Left ventricle myocardium superior (tissue), 1 donor: ENCODE measurements at regions of chr2 and their contacts with region 1.

Region 1: GRCh38 chr2:102703748-102704147 is 58.1 kb upstream of the TMEM182 start:
- DNase-seq: no peak
- ATAC-seq: peak; percentile 59

Region 2: DNA sequence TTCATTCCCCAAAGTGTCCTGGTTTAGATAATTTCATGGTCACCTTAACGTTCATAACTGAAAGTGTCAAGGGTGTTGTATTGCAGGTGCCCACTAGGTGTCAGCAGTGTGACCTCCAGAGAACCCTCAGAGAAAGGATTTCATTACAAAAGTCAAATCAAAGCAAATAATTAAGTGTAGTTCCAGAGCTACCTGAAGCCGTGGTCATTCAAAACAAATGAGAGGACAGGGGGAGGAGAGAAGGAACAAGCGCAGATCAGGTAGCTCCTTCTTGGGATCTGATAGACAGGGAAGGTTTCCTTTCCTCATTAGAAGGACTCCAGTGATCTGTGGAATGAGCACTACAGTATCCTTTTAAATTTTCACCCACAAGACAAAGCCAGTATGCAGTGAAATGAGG is 230.7 kb before region 1 on chr2 and contains the start of gene SLC9A4:
- intact Hi-C with region 1: loop called (anchors 5 kb)
- DNase-seq: no peak
- ATAC-seq: no peak
- total RNA-seq, gene SLC9A4: not detected

Region 3: GRCh38 chr2:102606363-102606762 is 97.4 kb before region 1 on chr2:
- intact Hi-C with region 1: no loop called
- DNase-seq: no peak
- ATAC-seq: no peak

Region 4: GRCh38 chr2:102841107-102841840 is 137.5 kb after region 1 on chr2:
- intact Hi-C with region 1: no loop called
- DNase-seq: peak; percentile 34
- ATAC-seq: peak; percentile 86

Region 5: DNA sequence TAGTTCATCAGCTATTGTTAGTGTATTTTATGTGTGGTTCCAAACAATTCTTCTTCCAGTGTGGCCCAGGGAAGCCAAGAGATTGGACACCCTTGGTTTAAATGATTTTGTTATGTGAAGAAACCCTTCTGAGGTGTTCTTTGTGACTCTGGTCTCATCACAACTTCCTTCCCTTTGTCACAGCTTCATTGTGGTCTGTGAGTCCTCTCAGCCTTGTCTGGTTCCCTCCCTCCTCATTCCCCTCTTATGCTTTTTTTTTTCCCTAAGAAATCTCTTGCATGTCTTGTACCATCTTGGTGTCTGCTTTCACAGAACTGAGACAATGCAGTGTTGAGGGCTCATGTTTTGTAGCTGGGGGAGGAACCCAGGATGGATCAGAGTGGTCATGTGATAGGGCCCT is 177.0 kb after region 1 on chr2:
- intact Hi-C with region 1: no loop called
- DNase-seq: no peak
- ATAC-seq: no peak

Region 6: DNA sequence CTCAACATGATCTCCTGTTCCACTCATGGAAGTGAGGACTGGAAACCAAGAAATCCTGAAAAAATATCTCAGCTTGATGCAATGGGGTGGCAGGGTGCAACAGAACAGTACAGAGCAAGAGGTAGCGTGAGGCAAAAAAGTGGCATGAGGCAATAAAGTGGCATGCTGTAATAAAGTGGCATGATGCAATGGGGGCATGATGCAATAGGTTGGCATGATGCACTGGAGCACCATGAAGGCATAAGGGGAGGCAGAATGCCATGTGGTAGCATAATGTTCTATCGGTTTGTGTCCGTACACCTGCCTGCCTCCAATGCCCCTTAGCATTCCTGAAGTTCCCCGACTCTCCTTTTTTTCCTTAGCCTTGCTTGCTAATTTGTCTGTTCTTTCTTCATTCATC is 706.5 kb after region 1 on chr2:
- intact Hi-C with region 1: no loop called
- DNase-seq: no peak
- ATAC-seq: no peak